Activated naive CD4-positive, alpha-beta T cell treated with anti-CD3 and anti-CD28 coated beads for 36 hours (primary cell): ENCODE measurements at regions of chrX and their contacts with region 1.

Region 1: GRCh38 chrX:75156021-75156945 is at the start of gene ABCB7:
- DNase-seq: peak; percentile 68
- H3K4me3 Mint-ChIP-seq: peak within 1 kb of the TSS; percentile 99
- H3K27ac Mint-ChIP-seq: peak within 1 kb of the TSS; percentile 96
- H3K4me1 Mint-ChIP-seq: peaks cover 45% of the 10 kb centered on the region
- H3K27me3 Mint-ChIP-seq: no peaks in the 10 kb centered on the region
- total RNA-seq, gene ABCB7: 46.8 to 47.6 TPM

Region 2: GRCh38 chrX:73214426-73215094 is 1941.7 kb before region 1 on chrX and contains the start of gene NAP1L2:
- CTCF ChIA-PET with region 1: no interaction called
- intact Hi-C with region 1: loop called (anchors 5 kb)
- DNase-seq: peak; percentile 59
- H3K4me3 Mint-ChIP-seq: peak within 1 kb of the TSS; percentile 91
- H3K27ac Mint-ChIP-seq: peak within 1 kb of the TSS; percentile 91
- H3K4me1 Mint-ChIP-seq: peaks cover 19% of the 10 kb centered on the region
- H3K27me3 Mint-ChIP-seq: peaks cover 3% of the 10 kb centered on the region
- total RNA-seq, gene NAP1L2: 2.5 to 2.7 TPM

Region 3: GRCh38 chrX:74980802-74981201 is 175.5 kb before region 1 on chrX:
- CTCF ChIA-PET with region 1: no interaction called
- intact Hi-C with region 1: no loop called
- DNase-seq: no peak
- H3K4me3 Mint-ChIP-seq: no peak overlapping the region
- H3K27ac Mint-ChIP-seq: no peak overlapping the region
- H3K4me1 Mint-ChIP-seq: no peaks in the 10 kb centered on the region
- H3K27me3 Mint-ChIP-seq: no peaks in the 10 kb centered on the region

Region 4: DNA sequence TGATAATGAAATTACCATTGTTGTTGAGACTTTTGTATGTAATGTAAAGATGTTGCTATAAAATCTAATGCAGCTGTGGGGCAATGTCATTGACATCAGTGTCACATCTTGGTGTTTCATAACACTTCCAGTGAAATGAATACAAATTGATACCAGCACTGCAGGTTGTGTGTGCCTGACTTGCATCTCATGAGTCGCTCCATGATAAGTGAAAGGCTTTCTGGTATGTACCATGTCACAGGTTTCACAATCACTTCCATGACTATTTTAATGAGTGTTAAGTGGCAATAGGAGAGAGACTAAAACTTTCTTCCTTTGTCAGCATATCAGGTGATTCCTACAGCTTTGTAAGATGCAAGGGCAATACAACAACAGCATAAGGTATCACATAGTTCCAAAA is 94.6 kb before region 1 on chrX:
- CTCF ChIA-PET with region 1: no interaction called
- intact Hi-C with region 1: loop called (anchors 5 kb)
- DNase-seq: no peak
- H3K4me3 Mint-ChIP-seq: no peak overlapping the region
- H3K27ac Mint-ChIP-seq: no peak overlapping the region
- H3K4me1 Mint-ChIP-seq: peaks cover 2% of the 10 kb centered on the region
- H3K27me3 Mint-ChIP-seq: no peaks in the 10 kb centered on the region

Region 5: DNA sequence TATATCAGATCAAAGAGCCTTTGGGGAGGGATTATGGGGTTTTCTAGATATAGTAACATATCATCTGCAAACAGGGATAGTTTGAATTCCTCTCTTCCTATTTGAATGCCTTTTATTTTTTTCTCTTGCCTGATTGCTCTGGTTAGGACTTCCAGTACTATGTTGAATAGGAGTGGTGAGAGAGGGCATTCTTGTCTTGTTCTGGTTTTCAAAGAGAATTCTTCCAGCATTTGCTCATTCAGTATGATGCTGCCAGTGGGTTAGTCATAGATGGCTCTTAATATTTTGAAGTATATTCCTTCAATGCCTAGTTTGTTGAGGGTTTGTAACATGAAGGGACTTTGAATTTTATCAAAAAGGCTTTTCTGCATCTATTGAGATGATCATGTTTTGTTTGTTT is 25.4 kb after region 1 on chrX:
- CTCF ChIA-PET with region 1: no interaction called
- intact Hi-C with region 1: no loop called
- DNase-seq: no peak
- H3K4me3 Mint-ChIP-seq: no peak overlapping the region
- H3K27ac Mint-ChIP-seq: no peak overlapping the region
- H3K4me1 Mint-ChIP-seq: no peaks in the 10 kb centered on the region
- H3K27me3 Mint-ChIP-seq: no peaks in the 10 kb centered on the region

Region 6: DNA sequence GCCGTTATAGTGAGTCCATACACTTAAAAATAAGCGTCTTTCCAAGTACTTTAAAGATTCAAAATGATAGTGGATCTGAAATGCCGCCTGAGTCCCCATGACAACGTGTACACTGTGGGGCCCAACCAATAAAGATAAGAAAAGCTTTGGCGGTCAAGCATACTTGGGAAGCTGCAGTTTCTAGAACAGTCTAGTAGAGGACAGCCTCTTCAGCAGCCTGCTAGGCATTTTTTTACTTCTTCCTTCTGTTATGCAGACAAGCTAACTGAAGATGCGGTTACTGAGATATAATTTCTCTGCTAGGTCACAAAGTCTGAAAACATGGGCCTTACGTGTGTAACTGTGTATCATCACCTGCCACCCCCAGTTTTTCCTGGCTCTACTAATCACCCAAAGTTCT is 117.2 kb after region 1 on chrX:
- CTCF ChIA-PET with region 1: no interaction called
- intact Hi-C with region 1: loop called (anchors 1 kb)
- DNase-seq: peak; percentile 26
- H3K4me3 Mint-ChIP-seq: peak overlapping the region; percentile 85
- H3K27ac Mint-ChIP-seq: peak overlapping the region; percentile 91
- H3K4me1 Mint-ChIP-seq: peaks cover 43% of the 10 kb centered on the region
- H3K27me3 Mint-ChIP-seq: no peaks in the 10 kb centered on the region

Region 7: DNA sequence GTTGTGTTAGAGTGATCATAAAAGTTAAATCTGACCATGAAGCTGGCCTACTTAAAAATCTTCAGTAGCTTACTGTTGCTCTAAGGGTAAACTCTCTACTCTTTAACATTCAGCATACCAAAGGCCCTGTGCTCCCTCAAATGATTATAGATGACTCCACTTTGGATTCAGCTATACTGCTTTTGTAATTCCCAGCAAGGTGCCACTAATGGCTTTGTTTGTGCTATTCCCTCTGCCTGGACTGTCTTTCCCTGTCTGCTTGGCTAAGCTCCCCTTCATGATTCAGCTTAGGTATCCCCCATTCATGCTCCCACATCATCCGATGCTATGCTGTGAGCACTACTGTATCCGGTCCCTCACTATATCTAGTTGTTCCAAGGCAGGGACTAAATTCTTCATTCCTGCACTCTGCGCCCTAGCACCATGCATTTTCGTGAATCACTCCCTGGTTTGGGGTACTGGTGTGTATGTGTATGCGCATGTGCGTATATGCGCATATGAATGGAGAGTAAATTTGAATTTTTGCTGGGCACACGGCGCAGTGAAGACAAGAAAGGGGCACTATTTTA is 1016.1 kb after region 1 on chrX:
- CTCF ChIA-PET with region 1: no interaction called
- intact Hi-C with region 1: loop called (anchors 2 kb)
- DNase-seq: no peak
- H3K4me3 Mint-ChIP-seq: peak overlapping the region; percentile 92
- H3K27ac Mint-ChIP-seq: peak overlapping the region; percentile 93
- H3K4me1 Mint-ChIP-seq: peaks cover 53% of the 10 kb centered on the region
- H3K27me3 Mint-ChIP-seq: no peaks in the 10 kb centered on the region